Posterior vena cava (tissue), 2 donors: ENCODE measurements at regions of chr2 and their contacts with region 1.

Region 1: GRCh38 chr2:239934571-239935171 is 90.5 kb downstream of the NDUFA10 start:
- DNase-seq: peak; percentile 85

Region 2: DNA sequence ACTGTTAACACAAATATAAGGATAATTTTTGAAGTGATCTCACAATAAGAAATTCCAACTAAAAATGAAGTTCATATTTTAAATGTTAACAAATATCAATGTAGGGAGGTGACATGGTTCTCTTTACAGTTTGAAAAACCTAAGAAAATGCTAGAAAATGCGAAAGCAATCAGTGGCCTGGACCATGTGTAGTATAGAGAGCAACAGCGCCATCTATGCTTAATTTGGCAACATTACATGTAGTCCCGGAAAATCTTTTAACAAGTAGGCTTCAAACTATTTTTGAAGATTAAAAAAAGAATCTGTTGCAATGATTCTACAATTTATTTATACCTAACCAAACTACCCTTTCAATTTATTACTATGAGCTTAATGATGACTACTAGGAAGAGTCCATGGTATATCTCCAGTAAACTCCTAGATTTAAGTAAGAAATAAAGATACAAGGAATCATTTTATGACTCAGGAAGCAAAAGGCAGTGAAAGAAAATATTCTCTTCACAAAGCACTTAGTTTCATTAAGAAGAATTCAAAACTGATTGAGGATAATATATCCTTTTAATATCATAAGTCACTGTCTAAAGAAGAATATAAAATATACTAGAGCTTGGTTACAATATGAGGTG is 57.1 kb after region 1 on chr2:
- intact Hi-C with region 1: loop called in 1 of 2 experiments (anchors 5 kb)
- DNase-seq: no peak